ENCODE measurements at regions of chr4 and their contacts with region 1.

Region 1: GRCh38 chr4:139961344-139961946 is 192.5 kb downstream of the MAML3 start:
- DNase-seq: no peak
- H3K4me3 ChIP-seq: no peak overlapping the region
- H3K27ac ChIP-seq: no peak overlapping the region
- H3K4me1 ChIP-seq: peaks cover 13% of the 10 kb centered on the region
- H3K27me3 ChIP-seq: no peaks in the 10 kb centered on the region
- CTCF ChIP-seq: no peak
- EP300 ChIP-seq: no peak
- POLR2A ChIP-seq: no peak

Region 2: DNA sequence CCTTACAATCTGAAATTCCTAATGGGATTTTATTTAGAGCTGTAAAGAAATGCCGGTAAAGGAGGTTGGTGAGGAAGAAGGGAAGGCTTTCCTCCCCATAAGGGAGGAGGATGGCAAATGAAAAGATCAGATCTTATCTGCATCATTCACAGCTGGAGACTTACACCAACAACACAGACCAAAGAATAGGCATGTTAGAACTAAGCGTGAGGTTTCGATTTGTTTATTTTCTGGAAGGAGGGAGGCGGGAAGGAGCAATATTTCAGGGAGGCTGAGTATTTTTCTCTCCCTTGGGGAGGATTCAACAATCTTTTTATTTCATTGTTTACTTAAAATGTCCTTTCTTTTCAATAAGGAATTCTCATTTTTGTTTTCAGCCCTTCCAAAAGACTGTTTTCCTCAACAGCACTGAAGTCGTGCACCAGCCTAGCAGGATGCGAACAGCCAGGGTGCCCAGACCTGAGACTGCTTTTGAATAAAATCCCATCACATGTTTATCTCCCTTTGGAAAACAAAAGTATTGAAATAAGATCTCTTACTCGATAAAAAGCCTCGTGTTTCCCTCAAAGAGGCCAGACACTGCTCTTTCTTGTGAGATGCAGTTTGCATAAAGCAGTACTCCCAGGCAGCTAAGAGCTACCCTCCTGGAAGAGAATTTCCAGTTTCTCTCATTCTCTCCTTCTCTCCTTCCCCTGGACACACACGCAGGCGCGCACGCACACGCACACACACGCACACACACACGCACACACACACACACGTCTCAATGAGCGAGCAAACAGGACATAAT is 59.7 kb before region 1 on chr4:
- intact Hi-C with region 1: loop called in 1 of 4 experiments (anchors 10 kb)
- DNase-seq: no peak
- H3K4me3 ChIP-seq: peak overlapping the region; percentile 20
- H3K27ac ChIP-seq: peak overlapping the region in 1 of 2 donors; percentile 59
- H3K4me1 ChIP-seq: peaks cover 4% of the 10 kb centered on the region
- H3K27me3 ChIP-seq: no peaks in the 10 kb centered on the region
- CTCF ChIP-seq: no peak
- EP300 ChIP-seq: no peak
- POLR2A ChIP-seq: no peak